Psoas muscle (tissue), 8 donors: ENCODE measurements at regions of chr2 and their contacts with region 1.

Region 1: DNA sequence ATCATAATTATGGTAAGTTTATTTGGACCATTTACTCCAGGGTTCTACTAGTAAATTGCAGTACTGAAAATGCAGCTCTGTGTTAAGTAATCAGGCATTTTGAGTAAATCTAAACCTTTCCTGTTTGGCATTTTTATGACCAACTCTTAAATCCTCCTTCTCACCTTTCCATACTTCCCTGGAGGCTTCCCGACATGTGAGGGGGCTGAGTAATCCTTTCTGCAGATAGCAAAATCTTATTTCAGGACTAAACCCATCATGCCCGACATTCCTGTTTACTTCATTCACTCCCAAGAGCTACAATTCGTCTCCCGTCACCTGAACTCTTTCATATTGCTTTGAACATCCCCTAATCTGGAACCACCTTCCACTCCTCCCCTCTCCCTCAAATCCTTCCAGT is 296.6 kb downstream of the IKZF2 start:
- DNase-seq: no peak
- ATAC-seq: no peak
- H3K4me3 ChIP-seq: no peak overlapping the region
- H3K27ac ChIP-seq: no peak overlapping the region
- H3K4me1 ChIP-seq: no peaks in the 10 kb centered on the region
- H3K27me3 ChIP-seq: no peaks in the 10 kb centered on the region
- CTCF ChIP-seq: no peak

Region 2: GRCh38 chr2:212520340-212520739 is 334.4 kb before region 1 on chr2:
- intact Hi-C with region 1: no loop called
- DNase-seq: no peak
- ATAC-seq: peak in 1 of 4 donors; percentile 69
- H3K4me3 ChIP-seq: no peak overlapping the region
- H3K27ac ChIP-seq: no peak overlapping the region
- H3K4me1 ChIP-seq: peaks cover 5% of the 10 kb centered on the region
- H3K27me3 ChIP-seq: no peaks in the 10 kb centered on the region
- CTCF ChIP-seq: peak; percentile 30

Region 3: GRCh38 chr2:213551526-213551925 is 696.8 kb after region 1 on chr2:
- intact Hi-C with region 1: loop called in 1 of 2 experiments (anchors 5 kb)
- DNase-seq: no peak
- ATAC-seq: no peak
- H3K4me3 ChIP-seq: no peak overlapping the region
- H3K27ac ChIP-seq: no peak overlapping the region
- H3K4me1 ChIP-seq: no peaks in the 10 kb centered on the region
- H3K27me3 ChIP-seq: no peaks in the 10 kb centered on the region
- CTCF ChIP-seq: no peak